Activated T-helper 2 cell treated with anti-CD3 and anti-CD28 coated beads, Interferon-gamma antibody, Interleukin-2, Interleukin-4, amounts not matched to agents 10 μg/mL and 5 μg/mL and 100 μg/mL, durations not matched to agents 14 hours and 24 hours and 36 hours (primary cell): ENCODE measurements at regions of chr6 and their contacts with region 1.

Region 1: DNA sequence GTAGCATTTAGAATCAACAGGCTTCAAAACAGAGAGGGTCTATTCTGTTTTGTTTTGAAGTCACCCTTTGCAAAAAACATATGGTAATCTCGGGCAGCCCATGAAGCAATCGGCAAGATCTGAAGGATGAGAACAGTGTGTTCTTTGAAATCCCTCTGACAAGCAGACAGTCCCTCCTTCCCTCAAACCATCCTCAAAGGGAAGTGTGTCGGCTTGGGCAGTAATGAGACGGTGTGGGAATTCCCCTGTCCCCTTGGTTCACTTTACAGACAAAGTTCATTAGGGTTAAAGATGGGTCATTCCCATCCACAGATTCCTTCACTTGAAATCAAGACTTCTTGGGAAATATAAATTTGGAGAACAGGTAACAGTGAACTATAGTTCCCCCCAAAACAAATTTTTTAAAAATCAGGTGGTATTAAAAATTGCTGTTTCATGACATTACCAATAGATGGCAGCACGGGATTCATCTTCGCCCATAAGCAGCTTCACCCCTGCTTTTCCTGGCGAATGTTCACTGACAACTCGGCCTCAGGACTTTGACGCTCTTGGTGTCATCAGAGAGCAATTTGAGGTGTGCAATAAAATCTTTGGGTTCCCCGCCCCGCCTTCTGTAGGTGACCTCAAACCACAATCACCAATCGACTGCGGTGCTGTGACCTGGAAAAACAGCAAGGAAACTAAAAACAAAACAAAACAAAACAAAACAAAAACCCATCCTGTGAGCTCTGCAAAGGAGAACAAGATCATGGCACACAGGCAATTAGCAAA is 159.3 kb upstream of the TNFAIP3 start:
- DNase-seq: peak; percentile 87
- H3K4me3 Mint-ChIP-seq: peak overlapping the region; percentile 49
- H3K27ac Mint-ChIP-seq: peak overlapping the region; percentile 86
- H3K4me1 Mint-ChIP-seq: peaks cover 78% of the 10 kb centered on the region
- H3K27me3 Mint-ChIP-seq: no peaks in the 10 kb centered on the region

Region 2: GRCh38 chr6:137791281-137792159 is 83.7 kb after region 1 on chr6:
- intact Hi-C with region 1: loop called (anchors 1 kb)
- DNase-seq: no peak
- H3K4me3 Mint-ChIP-seq: peak overlapping the region; percentile 37
- H3K27ac Mint-ChIP-seq: peak overlapping the region; percentile 81
- H3K4me1 Mint-ChIP-seq: peaks cover 61% of the 10 kb centered on the region
- H3K27me3 Mint-ChIP-seq: no peaks in the 10 kb centered on the region

Region 3: DNA sequence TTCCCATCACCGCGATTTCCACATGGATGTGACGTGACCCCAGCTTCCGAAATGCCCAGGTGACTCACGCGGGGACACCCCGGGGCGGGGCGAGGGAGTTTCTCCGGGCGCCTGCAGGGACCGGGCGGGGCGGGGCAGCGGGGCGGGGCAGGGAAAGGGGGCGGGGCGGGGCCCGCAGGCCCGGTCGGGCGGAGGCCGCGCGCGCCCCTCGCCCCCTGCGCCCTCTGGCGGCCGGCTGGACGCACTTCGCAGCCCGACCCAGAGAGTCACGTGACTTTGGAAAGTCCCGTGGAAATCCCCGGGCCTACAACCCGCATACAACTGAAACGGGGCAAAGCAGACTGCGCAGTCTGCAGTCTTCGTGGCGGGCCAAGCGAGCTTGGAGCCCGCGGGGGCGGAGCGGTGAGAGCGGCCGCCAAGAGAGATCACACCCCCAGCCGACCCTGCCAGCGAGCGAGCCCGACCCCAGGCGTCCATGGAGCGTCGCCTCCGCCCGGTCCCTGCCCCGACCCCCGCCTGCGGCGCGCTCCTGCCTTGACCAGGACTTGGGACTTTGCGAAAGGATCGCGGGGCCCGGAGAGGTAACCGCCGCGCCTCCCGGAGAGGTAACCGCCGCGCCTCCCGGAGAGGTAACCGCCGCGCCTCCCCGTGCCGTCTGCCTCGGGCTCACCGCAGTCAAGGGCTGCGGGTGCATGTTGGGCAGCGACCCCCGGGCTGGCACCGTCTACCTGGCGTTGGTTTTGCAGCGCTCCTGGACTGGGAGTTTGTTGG is 159.3 kb after region 1 on chr6 and contains the start of gene TNFAIP3:
- intact Hi-C with region 1: loop called (anchors 1 kb)
- DNase-seq: peak; percentile 94
- H3K4me3 Mint-ChIP-seq: peak within 1 kb of the TSS; percentile 96
- H3K27ac Mint-ChIP-seq: peak within 1 kb of the TSS; percentile 96
- H3K4me1 Mint-ChIP-seq: peaks cover 38% of the 10 kb centered on the region
- H3K27me3 Mint-ChIP-seq: no peaks in the 10 kb centered on the region
- total RNA-seq, gene TNFAIP3: 250 and 251 TPM in 2 replicates

Region 4: GRCh38 chr6:137903933-137904821 is 196.4 kb after region 1 on chr6:
- intact Hi-C with region 1: loop called (anchors 1 kb)
- DNase-seq: peak; percentile 44
- H3K4me3 Mint-ChIP-seq: peak overlapping the region; percentile 61
- H3K27ac Mint-ChIP-seq: peak overlapping the region; percentile 97
- H3K4me1 Mint-ChIP-seq: peaks cover 62% of the 10 kb centered on the region
- H3K27me3 Mint-ChIP-seq: no peaks in the 10 kb centered on the region

Region 5: DNA sequence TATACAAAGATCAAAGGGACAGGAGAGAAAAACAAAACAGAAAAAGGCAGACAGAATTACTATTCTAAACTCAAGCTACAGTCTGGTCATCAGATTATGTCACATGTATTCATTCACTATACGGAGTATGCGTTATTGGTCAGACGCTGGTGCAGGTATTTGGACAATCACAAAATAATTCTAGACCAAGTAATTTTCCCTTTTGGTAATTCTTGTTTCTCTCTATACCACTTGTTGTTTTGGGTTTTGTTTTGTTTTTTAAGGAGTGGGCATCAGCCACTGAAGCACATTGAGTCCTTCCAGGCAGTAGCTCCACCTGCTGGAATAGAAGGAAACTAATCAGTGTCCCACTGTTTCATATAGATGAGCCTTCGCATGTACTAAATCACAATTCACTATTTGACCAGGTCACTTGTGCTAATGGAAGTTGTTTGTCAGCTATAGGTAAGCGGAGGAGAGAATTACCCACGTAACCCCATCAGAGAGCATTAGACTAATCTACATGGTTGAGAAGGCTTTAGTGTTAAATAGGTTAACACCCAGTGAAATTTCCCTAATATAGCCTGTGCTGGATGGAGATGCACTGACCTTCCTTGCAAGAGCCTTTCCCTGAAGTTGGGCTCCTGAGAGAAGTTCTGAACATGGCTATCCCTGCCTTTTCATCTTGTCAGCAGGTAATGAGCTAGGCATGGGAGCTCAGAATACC is 237.2 kb after region 1 on chr6:
- intact Hi-C with region 1: loop called (anchors 1 kb)
- DNase-seq: no peak
- H3K4me3 Mint-ChIP-seq: no peak overlapping the region
- H3K27ac Mint-ChIP-seq: peak overlapping the region; percentile 69
- H3K4me1 Mint-ChIP-seq: peaks cover 57% of the 10 kb centered on the region
- H3K27me3 Mint-ChIP-seq: no peaks in the 10 kb centered on the region

Region 6: DNA sequence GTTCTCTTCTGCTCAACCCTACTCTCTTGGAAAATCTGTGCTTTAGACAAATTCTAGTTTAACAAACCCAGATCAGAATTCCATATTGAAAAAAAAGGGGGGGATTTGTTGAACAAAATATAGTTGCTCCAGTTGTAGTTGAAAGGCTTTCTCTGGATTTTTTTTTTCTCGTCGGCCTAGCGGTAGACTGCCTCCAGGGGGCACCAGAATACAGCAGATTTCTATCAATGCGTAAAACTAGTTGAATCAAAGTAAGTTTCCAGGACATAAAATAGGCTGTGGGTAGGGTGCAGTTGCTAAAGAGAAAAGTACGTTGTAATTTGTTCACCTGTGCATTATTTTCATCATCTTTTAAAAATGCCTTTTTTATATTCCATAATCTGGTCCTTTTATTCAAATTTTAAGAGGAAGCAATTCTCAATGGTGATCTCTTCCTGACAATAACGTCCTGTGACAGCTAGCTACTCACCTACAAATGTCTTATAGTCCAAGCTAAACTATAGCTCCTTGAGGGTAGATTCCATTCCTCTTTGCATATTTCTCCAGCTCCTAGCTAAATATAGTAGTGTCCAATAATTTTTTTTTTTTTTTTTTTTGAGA is 294.1 kb after region 1 on chr6:
- intact Hi-C with region 1: loop called (anchors 1 kb)
- DNase-seq: peak; percentile 31
- H3K4me3 Mint-ChIP-seq: no peak overlapping the region
- H3K27ac Mint-ChIP-seq: no peak overlapping the region
- H3K4me1 Mint-ChIP-seq: peaks cover 15% of the 10 kb centered on the region
- H3K27me3 Mint-ChIP-seq: peaks cover 17% of the 10 kb centered on the region